Natural killer cell (primary cell): ENCODE measurements at regions of chr14 and their contacts with region 1.

Region 1: GRCh38 chr14:23301288-23301968 is 1.2 kb downstream of the PPP1R3E start:
- DNase-seq: peak; percentile 97 to 99
- ATAC-seq: peak; percentile 79 to 93 (median 82)
- H3K4me3 ChIP-seq: peak overlapping the region; percentile 77
- H3K4me3 Mint-ChIP-seq: peak overlapping the region; percentile 92
- H3K27ac ChIP-seq: peak overlapping the region; percentile 94
- H3K27ac Mint-ChIP-seq: peak overlapping the region; percentile 92 to 99
- H3K4me1 ChIP-seq: peaks cover 29% of the 10 kb centered on the region
- H3K4me1 Mint-ChIP-seq: peaks cover 19 to 40% of the 10 kb centered on the region in 2 donors
- H3K27me3 ChIP-seq: no peaks in the 10 kb centered on the region
- H3K27me3 Mint-ChIP-seq: no peaks in the 10 kb centered on the region
- CTCF ChIP-seq: peak; percentile 69

Region 2: GRCh38 chr14:23120541-23121251 is 180.7 kb before region 1 on chr14:
- intact Hi-C with region 1: loop called (anchors 2 kb)
- DNase-seq: peak; percentile 72 to 91
- ATAC-seq: peak; percentile 95 to 100 (median 98)
- H3K4me3 ChIP-seq: no peak overlapping the region
- H3K4me3 Mint-ChIP-seq: peak overlapping the region; percentile 36
- H3K27ac ChIP-seq: peak overlapping the region; percentile 52
- H3K27ac Mint-ChIP-seq: peak overlapping the region; percentile 18 to 68
- H3K4me1 ChIP-seq: peaks cover 32% of the 10 kb centered on the region
- H3K4me1 Mint-ChIP-seq: peaks cover 10 to 11% of the 10 kb centered on the region in 2 donors
- H3K27me3 ChIP-seq: no peaks in the 10 kb centered on the region
- H3K27me3 Mint-ChIP-seq: peaks cover 0 to 8% of the 10 kb centered on the region in 2 donors
- CTCF ChIP-seq: peak; percentile 99

Region 3: DNA sequence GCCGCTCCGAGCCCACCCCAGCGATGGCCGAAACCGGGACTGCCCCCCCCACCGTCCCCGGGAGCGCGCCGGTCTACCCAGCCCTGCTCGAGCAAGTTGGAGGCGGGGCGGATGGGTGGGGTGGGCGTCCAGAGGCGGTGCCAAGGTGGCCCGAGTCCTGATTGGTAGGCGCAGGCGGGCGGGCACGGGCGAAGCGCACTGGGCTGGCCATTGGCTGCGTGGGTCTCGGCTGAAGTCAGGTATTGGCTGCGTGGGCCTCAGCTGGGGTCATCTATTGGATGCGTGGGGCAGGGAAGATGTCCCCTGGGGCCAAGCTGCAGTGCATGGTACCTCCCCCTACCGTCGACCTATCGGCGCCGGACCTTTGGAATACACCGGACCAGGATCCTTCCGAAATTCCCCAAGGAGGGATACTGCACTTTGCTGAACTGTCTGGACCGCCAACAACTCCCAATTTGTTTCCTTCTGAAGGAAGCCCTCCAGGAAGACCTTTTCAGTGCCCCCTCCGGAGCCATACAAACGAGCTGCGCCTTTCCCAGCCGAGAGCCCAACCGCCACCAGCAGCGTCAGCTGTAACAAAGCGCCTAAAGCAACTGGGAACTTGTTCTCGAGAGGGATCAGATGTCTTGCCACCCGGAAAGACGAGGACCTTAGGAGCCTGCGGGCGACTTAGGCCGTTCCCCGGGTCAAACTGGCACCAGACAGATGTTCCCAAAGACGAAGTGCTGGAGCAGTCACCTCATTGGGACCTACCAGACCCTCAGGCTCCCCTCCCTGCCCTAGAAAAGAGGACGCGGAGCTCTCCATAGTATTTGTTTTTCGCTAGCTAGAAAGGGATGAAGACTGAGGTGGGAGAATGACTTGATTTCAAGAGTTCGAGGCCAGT is 15.2 kb before region 1 on chr14 and contains the start of gene HOMEZ:
- intact Hi-C with region 1: loop called (anchors 1 kb)
- DNase-seq: peak; percentile 97
- ATAC-seq: peak; percentile 94 to 99 (median 97)
- H3K4me3 ChIP-seq: peak within 1 kb of the TSS; percentile 69
- H3K4me3 Mint-ChIP-seq: peak within 1 kb of the TSS; percentile 95
- H3K27ac ChIP-seq: peak within 1 kb of the TSS; percentile 78
- H3K27ac Mint-ChIP-seq: peak within 1 kb of the TSS; percentile 90 to 94
- H3K4me1 ChIP-seq: peaks cover 10% of the 10 kb centered on the region
- H3K4me1 Mint-ChIP-seq: peaks cover 13 to 18% of the 10 kb centered on the region in 2 donors
- H3K27me3 ChIP-seq: no peaks in the 10 kb centered on the region
- H3K27me3 Mint-ChIP-seq: no peaks in the 10 kb centered on the region
- CTCF ChIP-seq: no peak
- total RNA-seq, gene HOMEZ: 5.1 to 10.1 (median 7.0) TPM

Region 4: DNA sequence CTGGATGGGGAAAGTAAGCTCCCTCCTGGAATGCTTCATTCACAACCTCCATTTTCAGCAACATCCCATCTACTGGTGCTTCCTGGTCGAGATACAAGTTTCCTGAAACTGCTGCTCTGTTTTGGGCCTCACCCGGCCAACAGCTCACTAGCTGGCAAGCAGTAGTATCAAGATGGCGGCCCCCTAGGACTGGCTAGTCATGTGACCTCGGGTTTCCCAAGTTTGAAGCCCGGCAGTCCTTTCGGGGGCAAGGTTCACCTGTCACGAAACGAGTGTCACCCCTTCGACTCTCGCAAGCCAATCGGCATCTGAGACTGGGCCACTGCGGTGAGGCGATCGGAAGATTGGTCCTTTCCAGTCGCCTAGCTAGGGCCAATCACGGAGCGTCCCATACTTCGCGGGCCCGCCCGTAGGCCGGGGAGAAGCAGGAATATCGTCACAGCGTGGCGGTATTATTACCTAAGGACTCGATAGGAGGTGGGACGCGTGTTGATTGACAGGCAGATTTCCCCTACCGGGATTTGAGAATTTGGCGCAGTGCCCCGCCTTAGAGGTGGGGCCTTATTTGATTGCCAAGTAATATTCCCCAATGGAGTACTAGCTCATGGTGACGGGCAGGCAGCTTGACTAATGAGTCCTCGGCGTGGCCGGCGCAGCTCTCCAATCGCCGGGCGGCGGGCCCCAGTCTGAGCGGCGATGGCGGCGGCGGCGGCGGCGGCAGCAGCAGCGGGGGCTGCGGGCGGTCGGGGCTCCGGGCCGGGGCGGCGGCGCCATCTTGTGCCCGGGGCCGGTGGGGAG is 19.5 kb after region 1 on chr14 and contains the start of gene PABPN1:
- intact Hi-C with region 1: loop called (anchors 1 kb)
- DNase-seq: peak; percentile 95 to 99
- ATAC-seq: peak; percentile 83 to 94 (median 85)
- H3K4me3 ChIP-seq: peak within 1 kb of the TSS; percentile 66
- H3K4me3 Mint-ChIP-seq: peak within 1 kb of the TSS; percentile 92
- H3K27ac ChIP-seq: peak within 1 kb of the TSS; percentile 91
- H3K27ac Mint-ChIP-seq: peak within 1 kb of the TSS; percentile 95 to 96
- H3K4me1 ChIP-seq: peaks cover 23% of the 10 kb centered on the region
- H3K4me1 Mint-ChIP-seq: peaks cover 31 to 35% of the 10 kb centered on the region in 2 donors
- H3K27me3 ChIP-seq: no peaks in the 10 kb centered on the region
- H3K27me3 Mint-ChIP-seq: no peaks in the 10 kb centered on the region
- CTCF ChIP-seq: no peak
- total RNA-seq, gene PABPN1: 226 to 261 (median 238) TPM

Region 5: DNA sequence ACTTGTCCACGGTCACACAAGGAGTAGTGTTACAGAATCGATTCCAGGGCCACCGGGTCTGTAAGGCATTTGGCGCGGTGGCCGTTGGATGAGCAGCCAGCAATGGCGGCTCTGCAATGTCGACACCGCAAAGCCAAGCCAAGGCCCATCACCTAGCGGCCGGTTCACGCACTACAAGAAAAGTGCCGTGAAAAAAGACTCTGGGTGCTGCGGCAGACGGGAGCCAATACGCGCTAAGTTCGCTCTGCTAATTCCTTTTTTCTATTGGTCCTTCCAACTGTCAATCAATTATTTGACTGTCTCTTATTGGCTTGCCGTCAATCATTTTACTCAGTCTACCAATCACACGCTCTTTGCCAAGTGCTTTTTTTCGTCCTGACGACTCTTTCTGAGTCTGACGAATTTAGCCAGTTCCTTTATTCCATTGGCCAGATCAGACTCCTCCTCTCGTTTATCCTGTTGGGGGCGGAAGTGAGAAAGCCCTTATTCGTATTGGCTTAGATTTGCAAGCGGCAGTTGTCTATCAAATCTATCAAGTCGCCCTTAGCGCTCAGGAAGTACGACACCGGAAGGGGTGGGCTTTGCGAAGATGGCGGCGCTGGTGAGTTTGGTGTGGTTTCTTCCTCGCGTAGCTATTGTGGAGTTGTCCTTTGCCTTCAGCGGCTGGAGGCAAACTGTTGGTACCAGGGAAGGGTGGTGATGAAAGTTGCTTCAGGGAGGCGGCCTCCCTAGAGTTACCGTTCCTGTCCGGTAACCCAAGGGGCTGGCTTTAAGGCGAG is 167.9 kb after region 1 on chr14 and contains the start of gene NGDN:
- intact Hi-C with region 1: loop called (anchors 1 kb)
- DNase-seq: peak; percentile 84 to 97
- ATAC-seq: peak; percentile 89 to 97 (median 90)
- H3K4me3 ChIP-seq: peak within 1 kb of the TSS; percentile 92
- H3K4me3 Mint-ChIP-seq: no peak within 1 kb of the TSS
- H3K27ac ChIP-seq: peak within 1 kb of the TSS; percentile 90
- H3K27ac Mint-ChIP-seq: no peak within 1 kb of the TSS
- H3K4me1 ChIP-seq: peaks cover 13% of the 10 kb centered on the region
- H3K4me1 Mint-ChIP-seq: peaks cover 0 to 5% of the 10 kb centered on the region in 2 donors
- H3K27me3 ChIP-seq: no peaks in the 10 kb centered on the region
- H3K27me3 Mint-ChIP-seq: peaks cover 3 to 5% of the 10 kb centered on the region in 2 donors
- CTCF ChIP-seq: peak; percentile 65
- total RNA-seq, gene NGDN: 110 to 136 (median 126) TPM